Activated CD4-positive, alpha-beta memory T cell treated with anti-CD3 and anti-CD28 coated beads, Interleukin-2, amount 10 ng/mL, durations not matched to agents 7 days and 5 days (primary cell): ENCODE measurements at regions of chr2 and their contacts with region 1.

Region 1: DNA sequence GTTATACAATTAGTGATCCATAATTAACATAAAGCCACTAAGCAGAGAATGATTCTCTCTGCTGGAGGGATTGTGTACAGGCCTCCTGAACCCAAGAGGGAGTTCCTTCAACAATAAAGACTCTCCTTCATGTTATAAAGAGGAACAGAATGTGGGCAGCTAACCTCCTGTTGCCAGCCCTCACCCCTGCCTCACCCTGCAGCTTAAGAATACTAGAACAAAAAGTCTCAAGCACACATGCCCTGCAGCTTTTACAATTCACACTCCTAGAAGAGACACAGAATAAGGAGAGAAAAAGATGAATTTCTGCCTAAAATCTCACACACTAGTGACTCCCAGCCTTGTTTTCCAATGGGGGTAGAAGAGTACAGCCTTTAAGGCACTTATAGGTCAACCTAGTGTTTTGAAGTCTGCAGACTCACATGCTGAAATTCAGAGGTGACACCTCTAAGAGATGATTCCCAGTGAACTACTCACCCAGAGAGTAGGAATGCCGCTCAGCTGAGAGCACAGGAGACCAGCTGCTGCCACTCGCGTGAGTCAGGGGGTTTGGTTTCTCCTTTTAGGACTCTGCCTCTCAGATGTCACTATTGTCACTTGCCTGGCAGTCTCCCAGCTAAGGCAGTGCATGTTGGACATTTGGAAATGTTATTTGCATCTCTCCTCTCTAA is 32.5 kb upstream of the IL1RL1 start:
- DNase-seq: no peak
- H3K4me3 Mint-ChIP-seq: no peak overlapping the region
- H3K27ac Mint-ChIP-seq: no peak overlapping the region
- H3K4me1 Mint-ChIP-seq: peaks cover 52% of the 10 kb centered on the region
- H3K27me3 Mint-ChIP-seq: peaks cover 1% of the 10 kb centered on the region

Region 2: GRCh38 chr2:102262216-102263129 is 16.4 kb before region 1 on chr2:
- CTCF ChIA-PET with region 1: interaction called, 3 read pairs
- POLR2A ChIA-PET with region 1: interaction called, 13 read pairs
- DNase-seq: no peak
- H3K4me3 Mint-ChIP-seq: no peak overlapping the region
- H3K27ac Mint-ChIP-seq: no peak overlapping the region
- H3K4me1 Mint-ChIP-seq: peaks cover 35% of the 10 kb centered on the region
- H3K27me3 Mint-ChIP-seq: no peaks in the 10 kb centered on the region

Region 3: DNA sequence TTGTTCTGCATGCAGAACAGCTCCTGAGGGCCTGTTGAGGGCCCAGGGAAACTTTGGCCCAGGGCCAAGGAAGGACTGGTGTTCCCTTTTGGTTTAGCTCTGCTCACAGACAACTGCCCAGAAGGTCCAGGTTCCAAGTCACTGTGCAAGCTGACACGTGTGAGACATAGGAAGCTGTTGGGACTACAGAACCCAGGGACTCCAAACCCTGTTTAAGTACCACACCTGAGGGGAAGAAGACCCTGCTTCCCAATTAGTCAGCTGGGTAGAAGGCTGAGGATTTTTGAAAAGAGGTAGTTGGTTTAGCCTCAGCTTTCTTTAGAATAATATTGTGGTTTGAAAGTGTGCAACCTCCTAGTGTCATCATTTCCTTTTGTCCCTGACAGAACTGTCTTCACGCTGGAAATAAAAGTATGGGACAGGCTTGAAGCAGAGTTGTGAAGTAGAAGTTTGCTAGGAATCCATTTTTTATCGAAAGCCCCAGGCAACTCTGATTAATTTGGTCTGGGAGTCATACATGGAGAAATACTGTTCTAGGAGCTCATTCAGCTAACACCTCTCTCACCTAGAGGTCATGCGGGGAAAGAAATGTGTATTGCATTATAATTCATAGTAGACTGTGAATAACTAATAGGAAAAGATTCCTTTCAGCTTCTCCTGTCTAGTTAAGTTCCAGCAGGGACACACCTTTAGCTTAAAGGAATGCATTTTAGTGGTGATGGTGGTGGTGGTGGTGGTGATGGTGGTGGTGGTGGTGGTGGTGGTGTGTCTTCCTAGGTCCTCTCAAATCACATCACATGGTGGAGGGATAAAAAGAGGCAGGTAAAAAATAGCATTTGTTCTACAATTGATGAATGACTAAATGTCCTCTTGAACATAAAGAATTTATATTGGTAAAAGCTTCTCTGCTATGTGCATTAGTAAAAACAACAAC is 12.7 kb after region 1 on chr2:
- CTCF ChIA-PET with region 1: interaction called, 5 read pairs
- POLR2A ChIA-PET with region 1: interaction called, 17 read pairs
- DNase-seq: no peak
- H3K4me3 Mint-ChIP-seq: no peak overlapping the region
- H3K27ac Mint-ChIP-seq: peak overlapping the region; percentile 29
- H3K4me1 Mint-ChIP-seq: peaks cover 39% of the 10 kb centered on the region
- H3K27me3 Mint-ChIP-seq: peaks cover 9% of the 10 kb centered on the region

Region 4: DNA sequence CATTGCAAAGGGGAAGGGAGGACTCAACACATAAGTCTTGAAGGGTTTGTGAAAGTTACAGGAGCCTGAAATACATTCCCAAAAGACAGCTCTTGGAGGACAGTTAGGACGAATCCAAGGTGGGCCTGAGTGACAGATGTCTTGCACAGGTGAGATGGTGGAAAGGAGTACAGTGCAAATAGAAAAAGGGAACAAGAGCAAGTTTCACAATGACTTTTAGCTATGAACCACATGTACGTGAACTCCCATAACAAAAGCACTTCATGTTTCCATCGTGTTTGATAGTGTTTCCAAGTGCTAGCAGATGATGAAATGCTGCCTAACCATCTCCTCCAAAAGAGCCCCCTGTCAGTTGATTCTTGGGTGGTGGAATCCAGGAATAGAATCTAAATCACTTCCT is 145.9 kb after region 1 on chr2:
- CTCF ChIA-PET with region 1: no interaction called
- POLR2A ChIA-PET with region 1: no interaction called
- DNase-seq: no peak
- H3K4me3 Mint-ChIP-seq: no peak overlapping the region
- H3K27ac Mint-ChIP-seq: no peak overlapping the region
- H3K4me1 Mint-ChIP-seq: peaks cover 76% of the 10 kb centered on the region
- H3K27me3 Mint-ChIP-seq: peaks cover 16% of the 10 kb centered on the region